Endothelial cell of umbilical vein (primary cell): ENCODE measurements at regions of chr13 and their contacts with region 1.

Region 1: GRCh38 chr13:106349080-106349931 is 186.2 kb downstream of the EFNB2 start:
- DNase-seq: peak; percentile 99
- H3K4me3 ChIP-seq: peak overlapping the region in 2 of 3 experiments; percentile 17 to 52
- H3K27ac ChIP-seq: peak overlapping the region; percentile 98
- H3K4me1 ChIP-seq: peaks cover 30% of the 10 kb centered on the region
- H3K27me3 ChIP-seq: no peaks in the 10 kb centered on the region
- CTCF ChIP-seq: no peak
- POLR2A ChIP-seq: peak; percentile 71

Region 2: DNA sequence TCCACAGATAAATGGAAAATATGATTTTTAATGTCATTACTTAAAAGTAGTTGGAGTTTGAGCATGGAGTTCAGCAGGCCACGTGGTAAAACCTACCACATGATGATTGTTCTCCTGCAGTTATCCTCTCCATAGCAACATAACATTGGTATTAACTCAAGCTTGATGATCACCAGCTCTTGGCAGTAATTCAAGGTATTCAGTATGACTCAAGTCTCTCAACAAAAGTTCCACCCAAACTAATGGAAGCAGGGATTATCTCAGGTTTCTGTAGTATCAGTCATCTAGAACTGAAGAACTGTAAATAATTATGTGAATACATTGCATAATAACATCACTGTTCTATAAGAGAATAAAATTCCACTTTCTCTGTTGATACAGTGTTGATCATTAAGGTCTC is 906.4 kb before region 1 on chr13:
- CTCF ChIA-PET with region 1: no interaction called
- POLR2A ChIA-PET with region 1: no interaction called
- dilution Hi-C with region 1: no loop called
- intact Hi-C with region 1: loop called (anchors 10 kb)
- DNase-seq: peak; percentile 93
- H3K4me3 ChIP-seq: no peak overlapping the region
- H3K27ac ChIP-seq: peak overlapping the region; percentile 65
- H3K4me1 ChIP-seq: peaks cover 24% of the 10 kb centered on the region
- H3K27me3 ChIP-seq: no peaks in the 10 kb centered on the region
- CTCF ChIP-seq: no peak
- POLR2A ChIP-seq: no peak

Region 3: GRCh38 chr13:105740739-105741138 is 608.6 kb before region 1 on chr13:
- CTCF ChIA-PET with region 1: no interaction called
- POLR2A ChIA-PET with region 1: no interaction called
- dilution Hi-C with region 1: no loop called
- intact Hi-C with region 1: no loop called
- DNase-seq: no peak
- H3K4me3 ChIP-seq: no peak overlapping the region
- H3K27ac ChIP-seq: no peak overlapping the region
- H3K4me1 ChIP-seq: no peaks in the 10 kb centered on the region
- H3K27me3 ChIP-seq: no peaks in the 10 kb centered on the region
- CTCF ChIP-seq: no peak
- POLR2A ChIP-seq: no peak

Region 4: GRCh38 chr13:106117035-106117434 is 232.3 kb before region 1 on chr13:
- CTCF ChIA-PET with region 1: interaction called, 6 read pairs
- POLR2A ChIA-PET with region 1: interaction called, 3 read pairs
- dilution Hi-C with region 1: no loop called
- intact Hi-C with region 1: loop called (anchors 2 kb)
- DNase-seq: peak; percentile 93
- H3K4me3 ChIP-seq: no peak overlapping the region
- H3K27ac ChIP-seq: peak overlapping the region; percentile 74
- H3K4me1 ChIP-seq: peaks cover 52% of the 10 kb centered on the region
- H3K27me3 ChIP-seq: no peaks in the 10 kb centered on the region
- CTCF ChIP-seq: no peak
- POLR2A ChIP-seq: no peak

Region 5: GRCh38 chr13:106367361-106367971 is 18.2 kb after region 1 on chr13:
- CTCF ChIA-PET with region 1: interaction called, 4 read pairs
- POLR2A ChIA-PET with region 1: interaction called, 3 read pairs
- dilution Hi-C with region 1: no loop called
- intact Hi-C with region 1: loop called (anchors 1 kb)
- DNase-seq: peak; percentile 86
- H3K4me3 ChIP-seq: no peak overlapping the region
- H3K27ac ChIP-seq: peak overlapping the region; percentile 15
- H3K4me1 ChIP-seq: peaks cover 21% of the 10 kb centered on the region
- H3K27me3 ChIP-seq: no peaks in the 10 kb centered on the region
- CTCF ChIP-seq: no peak
- POLR2A ChIP-seq: no peak

Region 6: GRCh38 chr13:106493533-106494220 is 144.4 kb after region 1 on chr13:
- CTCF ChIA-PET with region 1: interaction called, 3 read pairs
- POLR2A ChIA-PET with region 1: no interaction called
- dilution Hi-C with region 1: no loop called
- intact Hi-C with region 1: loop called (anchors 2 kb)
- DNase-seq: no peak
- H3K4me3 ChIP-seq: no peak overlapping the region
- H3K27ac ChIP-seq: no peak overlapping the region
- H3K4me1 ChIP-seq: peaks cover 35% of the 10 kb centered on the region
- H3K27me3 ChIP-seq: no peaks in the 10 kb centered on the region
- CTCF ChIP-seq: no peak
- POLR2A ChIP-seq: no peak